ENCODE measurements at regions of chr12 and their contacts with region 1.

Region 1: DNA sequence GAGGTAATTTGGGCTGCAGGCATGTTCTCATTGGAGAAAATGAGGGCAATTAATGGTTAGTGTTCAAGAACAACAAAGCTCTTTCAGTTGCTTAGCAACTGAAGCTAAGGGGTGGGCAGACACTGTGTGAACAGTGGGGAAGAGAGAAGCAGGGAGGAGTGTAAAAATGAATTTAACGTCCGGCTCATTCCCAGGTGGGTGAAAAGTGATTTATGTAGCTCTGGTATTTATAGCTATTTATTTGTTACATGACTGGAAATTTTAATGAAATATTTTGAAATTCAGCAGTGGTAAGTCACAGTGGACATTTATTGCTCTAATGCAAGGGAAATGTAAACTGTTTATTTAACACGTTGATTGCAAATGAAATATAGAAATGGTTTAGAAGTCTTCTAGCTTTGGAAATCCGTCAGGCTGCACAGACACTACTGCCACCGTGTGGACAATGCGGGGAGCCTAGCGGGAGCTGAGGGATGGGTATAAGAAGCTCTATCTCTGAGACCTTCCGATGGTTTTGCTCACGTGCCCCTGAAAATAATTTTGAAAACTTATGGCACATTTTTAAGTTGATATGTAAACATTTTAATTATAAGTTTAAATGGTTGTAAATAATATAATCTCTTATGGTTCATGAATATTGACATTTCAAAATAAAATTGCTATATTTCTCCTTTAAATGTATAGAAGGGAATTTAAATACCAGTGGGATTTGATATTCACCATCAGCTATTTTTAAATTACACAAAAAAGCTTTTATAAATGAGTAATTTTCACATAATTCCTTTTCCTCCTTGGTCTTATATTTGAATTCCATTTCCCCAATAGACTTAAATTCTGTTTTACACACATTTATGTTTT is 54.4 kb downstream of the E2F7 start:
- DNase-seq: peak; percentile 34 to 85
- H3K4me3 ChIP-seq: no peak overlapping the region
- H3K27ac ChIP-seq: no peak overlapping the region
- H3K4me1 ChIP-seq: no peaks in the 10 kb centered on the region
- H3K27me3 ChIP-seq: no peaks in the 10 kb centered on the region
- CTCF ChIP-seq: peak; percentile 84 to 91 (median 90)
- EP300 ChIP-seq: no peak
- POLR2A ChIP-seq: no peak
- RAD21 ChIP-seq: peak; percentile 94 to 95

Region 2: DNA sequence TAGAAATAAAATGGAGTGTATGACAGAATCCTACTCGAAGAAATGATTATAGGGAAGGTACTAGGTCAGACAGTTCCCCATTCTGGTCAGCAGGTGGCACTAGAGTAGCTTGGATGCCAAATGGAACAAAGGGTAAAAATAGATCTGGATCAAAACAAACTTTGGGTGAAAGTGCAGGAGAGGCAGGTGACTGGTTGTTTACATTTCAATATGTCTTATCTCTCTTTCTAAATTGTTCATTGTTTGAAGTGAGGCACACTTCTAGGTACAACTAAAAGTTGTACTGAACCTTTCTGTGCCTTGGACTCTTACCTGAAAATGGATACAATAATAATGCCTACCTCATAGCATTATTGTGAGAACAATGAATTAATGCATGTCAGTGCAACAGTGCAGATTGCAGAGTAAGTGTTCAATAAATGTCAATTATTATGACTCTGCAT is 389.3 kb before region 1 on chr12:
- CTCF ChIA-PET with region 1: interaction called, 15 read pairs
- POLR2A ChIA-PET with region 1: no interaction called
- DNase-seq: peak; percentile 17 to 77
- H3K4me3 ChIP-seq: no peak overlapping the region
- H3K27ac ChIP-seq: no peak overlapping the region
- H3K4me1 ChIP-seq: no peaks in the 10 kb centered on the region; a peak in 1 of 7 replicates
- H3K27me3 ChIP-seq: no peaks in the 10 kb centered on the region
- CTCF ChIP-seq: peak in 2 of 3 experiments; percentile 86 to 89; a peak in 3 of 4 replicates
- EP300 ChIP-seq: no peak
- POLR2A ChIP-seq: no peak
- RAD21 ChIP-seq: peak; percentile 99

Region 3: GRCh38 chr12:76932196-76932595 is 78.7 kb before region 1 on chr12:
- CTCF ChIA-PET with region 1: interaction called, 11 read pairs
- POLR2A ChIA-PET with region 1: no interaction called
- DNase-seq: no peak
- H3K4me3 ChIP-seq: no peak overlapping the region
- H3K27ac ChIP-seq: no peak overlapping the region
- H3K4me1 ChIP-seq: no peaks in the 10 kb centered on the region
- H3K27me3 ChIP-seq: no peaks in the 10 kb centered on the region
- CTCF ChIP-seq: no peak
- EP300 ChIP-seq: no peak
- POLR2A ChIP-seq: no peak
- RAD21 ChIP-seq: no peak

Region 4: DNA sequence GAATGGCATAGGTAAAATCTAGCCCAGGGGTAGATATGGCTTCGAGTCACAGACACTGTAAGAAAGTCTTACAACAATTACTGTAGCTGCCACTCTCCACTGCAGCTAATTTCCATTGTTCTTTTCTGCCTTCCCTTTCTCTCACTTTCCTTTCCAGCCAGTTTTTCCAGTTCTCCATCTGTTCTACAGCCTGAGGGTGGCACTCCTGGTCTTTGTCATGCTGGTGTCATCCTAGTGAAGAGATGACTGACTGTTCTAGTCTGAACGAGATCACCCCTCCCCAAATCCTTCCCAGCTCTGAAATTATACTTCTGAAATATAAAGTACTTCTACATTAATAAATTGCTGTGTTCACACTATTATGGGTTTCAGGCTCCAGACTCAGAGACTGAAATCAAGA is 57.9 kb before region 1 on chr12:
- CTCF ChIA-PET with region 1: interaction called, 43 read pairs
- POLR2A ChIA-PET with region 1: interaction called, 3 read pairs
- DNase-seq: no peak
- H3K4me3 ChIP-seq: no peak overlapping the region
- H3K27ac ChIP-seq: no peak overlapping the region
- H3K4me1 ChIP-seq: no peaks in the 10 kb centered on the region
- H3K27me3 ChIP-seq: no peaks in the 10 kb centered on the region
- CTCF ChIP-seq: peak in 2 of 3 experiments; percentile 54 to 58; a peak in 3 of 4 replicates
- EP300 ChIP-seq: no peak
- POLR2A ChIP-seq: no peak
- RAD21 ChIP-seq: peak; percentile 79 to 83

Region 5: GRCh38 chr12:77025782-77026314 is 14.9 kb after region 1 on chr12:
- CTCF ChIA-PET with region 1: interaction called, 42 read pairs
- POLR2A ChIA-PET with region 1: interaction called, 5 read pairs
- DNase-seq: no peak
- H3K4me3 ChIP-seq: no peak overlapping the region
- H3K27ac ChIP-seq: no peak overlapping the region
- H3K4me1 ChIP-seq: no peaks in the 10 kb centered on the region
- H3K27me3 ChIP-seq: no peaks in the 10 kb centered on the region
- CTCF ChIP-seq: no peak
- EP300 ChIP-seq: no peak
- POLR2A ChIP-seq: no peak
- RAD21 ChIP-seq: no peak

Region 6: GRCh38 chr12:77031745-77032144 is 20.8 kb after region 1 on chr12:
- CTCF ChIA-PET with region 1: interaction called, 12 read pairs
- POLR2A ChIA-PET with region 1: no interaction called
- DNase-seq: no peak
- H3K4me3 ChIP-seq: no peak overlapping the region
- H3K27ac ChIP-seq: no peak overlapping the region
- H3K4me1 ChIP-seq: no peaks in the 10 kb centered on the region
- H3K27me3 ChIP-seq: no peaks in the 10 kb centered on the region
- CTCF ChIP-seq: no peak
- EP300 ChIP-seq: no peak
- POLR2A ChIP-seq: no peak
- RAD21 ChIP-seq: no peak